Activated CD8-positive, alpha-beta T cell treated with anti-CD3 and anti-CD28 coated beads, Interleukin-2, amount 10 ng/mL, durations not matched to agents 7 days and 5 days (primary cell): ENCODE measurements at regions of chr20 and their contacts with region 1.

Region 1: GRCh38 chr20:43537921-43538877 is 20.6 kb upstream of the SGK2 start:
- DNase-seq: peak; percentile 59
- ATAC-seq: peak; percentile 46
- H3K4me3 Mint-ChIP-seq: no peak overlapping the region
- H3K27ac Mint-ChIP-seq: peak overlapping the region; percentile 25
- H3K4me1 Mint-ChIP-seq: no peaks in the 10 kb centered on the region
- H3K27me3 Mint-ChIP-seq: no peaks in the 10 kb centered on the region

Region 2: GRCh38 chr20:43252761-43253160 is 285.4 kb before region 1 on chr20:
- CTCF ChIA-PET with region 1: no interaction called
- POLR2A ChIA-PET with region 1: no interaction called
- DNase-seq: no peak
- ATAC-seq: no peak
- H3K4me3 Mint-ChIP-seq: no peak overlapping the region
- H3K27ac Mint-ChIP-seq: no peak overlapping the region
- H3K4me1 Mint-ChIP-seq: no peaks in the 10 kb centered on the region
- H3K27me3 Mint-ChIP-seq: no peaks in the 10 kb centered on the region

Region 3: GRCh38 chr20:43408848-43409576 is 129.2 kb before region 1 on chr20:
- CTCF ChIA-PET with region 1: no interaction called
- POLR2A ChIA-PET with region 1: no interaction called
- DNase-seq: peak; percentile 29
- ATAC-seq: no peak
- H3K4me3 Mint-ChIP-seq: no peak overlapping the region
- H3K27ac Mint-ChIP-seq: no peak overlapping the region
- H3K4me1 Mint-ChIP-seq: no peaks in the 10 kb centered on the region
- H3K27me3 Mint-ChIP-seq: peaks cover 21% of the 10 kb centered on the region

Region 4: GRCh38 chr20:43430265-43431133 is 107.7 kb before region 1 on chr20:
- CTCF ChIA-PET with region 1: no interaction called
- POLR2A ChIA-PET with region 1: no interaction called
- DNase-seq: no peak
- ATAC-seq: no peak
- H3K4me3 Mint-ChIP-seq: no peak overlapping the region
- H3K27ac Mint-ChIP-seq: no peak overlapping the region
- H3K4me1 Mint-ChIP-seq: no peaks in the 10 kb centered on the region
- H3K27me3 Mint-ChIP-seq: peaks cover 13% of the 10 kb centered on the region

Region 5: DNA sequence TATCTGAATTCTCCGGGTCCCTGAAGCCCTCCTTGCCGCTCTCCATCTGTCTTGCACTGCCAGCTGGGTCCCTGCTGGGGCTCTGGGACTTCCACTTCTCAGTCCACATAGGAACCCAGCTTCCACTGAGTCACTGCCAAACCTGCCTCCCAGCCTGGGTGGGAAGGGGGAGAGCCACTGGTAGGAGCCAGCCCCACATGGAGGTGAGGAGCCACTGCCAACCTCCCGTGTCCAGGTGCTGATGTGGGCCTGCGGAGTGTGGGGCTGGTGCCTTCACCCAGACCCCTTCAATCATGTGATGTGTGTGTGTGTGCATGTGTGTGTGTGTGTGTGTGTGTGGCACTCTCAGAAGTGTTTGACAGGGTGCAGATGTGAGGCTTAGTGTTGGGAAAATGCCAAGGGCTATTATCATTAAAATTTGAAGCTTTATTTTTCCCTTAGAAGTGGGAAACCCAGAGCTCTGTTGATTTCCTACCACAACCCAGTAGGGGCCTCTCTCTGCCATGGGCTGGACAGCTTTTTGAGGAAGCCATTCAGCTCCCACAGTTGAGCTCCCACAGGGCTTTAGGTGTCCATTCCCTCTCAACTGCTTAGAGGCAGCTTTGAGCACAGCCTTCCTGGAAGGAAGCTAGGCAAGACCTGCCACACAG is 11.3 kb after region 1 on chr20:
- CTCF ChIA-PET with region 1: interaction called, 12 read pairs
- POLR2A ChIA-PET with region 1: no interaction called
- DNase-seq: no peak
- ATAC-seq: no peak
- H3K4me3 Mint-ChIP-seq: no peak overlapping the region
- H3K27ac Mint-ChIP-seq: no peak overlapping the region
- H3K4me1 Mint-ChIP-seq: no peaks in the 10 kb centered on the region
- H3K27me3 Mint-ChIP-seq: peaks cover 3% of the 10 kb centered on the region

Region 6: GRCh38 chr20:43568706-43569105 is 30.5 kb after region 1 on chr20:
- CTCF ChIA-PET with region 1: no interaction called
- POLR2A ChIA-PET with region 1: no interaction called
- DNase-seq: no peak
- ATAC-seq: no peak
- H3K4me3 Mint-ChIP-seq: no peak overlapping the region
- H3K27ac Mint-ChIP-seq: no peak overlapping the region
- H3K4me1 Mint-ChIP-seq: no peaks in the 10 kb centered on the region
- H3K27me3 Mint-ChIP-seq: no peaks in the 10 kb centered on the region